ENCODE measurements at regions of chr15 and their contacts with region 1.

Region 1: GRCh38 chr15:74956648-74957300 is at the start of gene RPP25:
- DNase-seq: peak; percentile 73
- ATAC-seq: peak; percentile 93
- H3K4me3 Mint-ChIP-seq: peak within 1 kb of the TSS; percentile 79
- H3K27ac Mint-ChIP-seq: no peak within 1 kb of the TSS
- H3K4me1 Mint-ChIP-seq: peaks cover 34% of the 10 kb centered on the region
- H3K27me3 Mint-ChIP-seq: peaks cover 29% of the 10 kb centered on the region
- CTCF ChIP-seq: no peak
- total RNA-seq, gene RPP25: 4.0 and 4.3 TPM in 2 replicates

Region 2: GRCh38 chr15:74127260-74127953 is 829.4 kb before region 1 on chr15:
- CTCF ChIA-PET with region 1: no interaction called
- POLR2A ChIA-PET with region 1: no interaction called
- intact Hi-C with region 1: loop called (anchors 5 kb)
- DNase-seq: peak; percentile 83
- ATAC-seq: peak; percentile 79
- H3K4me3 Mint-ChIP-seq: peak overlapping the region; percentile 61
- H3K27ac Mint-ChIP-seq: no peak overlapping the region
- H3K4me1 Mint-ChIP-seq: peaks cover 68% of the 10 kb centered on the region
- H3K27me3 Mint-ChIP-seq: peaks cover 41% of the 10 kb centered on the region
- CTCF ChIP-seq: peak; percentile 71

Region 3: GRCh38 chr15:74695597-74696397 is 261.0 kb before region 1 on chr15 and contains the start of gene EDC3:
- CTCF ChIA-PET with region 1: no interaction called
- POLR2A ChIA-PET with region 1: no interaction called
- intact Hi-C with region 1: no loop called
- DNase-seq: peak; percentile 80
- ATAC-seq: peak; percentile 93
- H3K4me3 Mint-ChIP-seq: peak within 1 kb of the TSS; percentile 99
- H3K27ac Mint-ChIP-seq: peak within 1 kb of the TSS; percentile 91
- H3K4me1 Mint-ChIP-seq: peaks cover 39% of the 10 kb centered on the region
- H3K27me3 Mint-ChIP-seq: no peaks in the 10 kb centered on the region
- CTCF ChIP-seq: no peak
- total RNA-seq, gene EDC3: 44.8 and 49.5 TPM in 2 replicates

Region 4: GRCh38 chr15:74937596-74938296 is 19.0 kb before region 1 on chr15 and contains the start of gene COX5A:
- CTCF ChIA-PET with region 1: interaction called, 3 read pairs
- POLR2A ChIA-PET with region 1: interaction called, 10 read pairs
- intact Hi-C with region 1: loop called (anchors 2 kb)
- DNase-seq: peak; percentile 86
- ATAC-seq: peak; percentile 97
- H3K4me3 Mint-ChIP-seq: peak within 1 kb of the TSS; percentile 86
- H3K27ac Mint-ChIP-seq: peak within 1 kb of the TSS; percentile 90
- H3K4me1 Mint-ChIP-seq: peaks cover 34% of the 10 kb centered on the region
- H3K27me3 Mint-ChIP-seq: no peaks in the 10 kb centered on the region
- CTCF ChIP-seq: no peak
- total RNA-seq, gene COX5A: 150 and 159 TPM in 2 replicates

Region 5: DNA sequence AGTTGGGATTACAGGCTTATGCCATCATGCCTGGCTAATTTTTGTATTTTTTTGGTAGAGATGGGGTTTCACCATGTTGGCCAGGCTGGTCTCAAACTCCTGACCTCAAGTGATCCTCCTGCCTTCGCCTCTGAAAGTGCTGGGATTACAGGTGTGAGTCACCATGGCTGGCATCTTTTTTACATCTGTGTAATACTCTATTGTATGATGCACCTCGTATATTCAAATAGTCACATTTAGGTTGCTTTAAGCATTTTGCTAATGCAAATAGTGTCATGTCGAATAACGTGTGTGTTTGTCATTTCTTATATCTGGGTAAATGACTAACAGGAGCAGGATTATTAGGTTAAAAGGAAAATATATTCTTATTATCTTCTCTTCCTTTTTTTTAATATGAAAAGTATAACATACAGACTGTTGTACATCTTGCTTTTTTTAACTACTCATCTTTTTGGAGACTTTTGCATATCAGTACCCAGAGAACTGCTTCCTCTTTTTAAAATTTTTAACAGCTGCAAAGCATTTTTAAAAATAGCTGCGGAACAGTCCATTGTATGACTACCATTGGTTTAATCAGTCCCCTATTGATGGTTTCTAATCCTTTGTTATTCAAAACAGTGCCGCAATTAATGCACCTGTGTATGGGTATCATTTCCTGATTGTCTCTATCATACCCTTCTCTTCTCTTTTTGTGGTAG is 52.0 kb after region 1 on chr15:
- CTCF ChIA-PET with region 1: no interaction called
- POLR2A ChIA-PET with region 1: interaction called, 6 read pairs
- intact Hi-C with region 1: loop called (anchors 5 kb)
- DNase-seq: no peak
- ATAC-seq: peak; percentile 85
- H3K4me3 Mint-ChIP-seq: peak overlapping the region; percentile 56
- H3K27ac Mint-ChIP-seq: peak overlapping the region; percentile 86
- H3K4me1 Mint-ChIP-seq: peaks cover 44% of the 10 kb centered on the region
- H3K27me3 Mint-ChIP-seq: peaks cover 20% of the 10 kb centered on the region
- CTCF ChIP-seq: no peak

Region 6: GRCh38 chr15:75616764-75617163 is 660.0 kb after region 1 on chr15:
- CTCF ChIA-PET with region 1: no interaction called
- POLR2A ChIA-PET with region 1: no interaction called
- intact Hi-C with region 1: no loop called
- DNase-seq: no peak
- ATAC-seq: no peak
- H3K4me3 Mint-ChIP-seq: no peak overlapping the region
- H3K27ac Mint-ChIP-seq: no peak overlapping the region
- H3K4me1 Mint-ChIP-seq: peaks cover 7% of the 10 kb centered on the region
- H3K27me3 Mint-ChIP-seq: no peaks in the 10 kb centered on the region
- CTCF ChIP-seq: no peak